Testis (tissue), 5 donors: ENCODE measurements at regions of chr13 and their contacts with region 1.

Region 1: GRCh38 chr13:114226699-114227323 is 7.9 kb upstream of the CDC16 start:
- DNase-seq: peak; percentile 93
- H3K4me3 ChIP-seq: no peak overlapping the region
- H3K27ac ChIP-seq: no peak overlapping the region
- H3K4me1 ChIP-seq: no peaks in the 10 kb centered on the region
- H3K27me3 ChIP-seq: no peaks in the 10 kb centered on the region
- CTCF ChIP-seq: peak; percentile 88 to 96 (median 93)
- POLR2A ChIP-seq: no peak

Region 2: GRCh38 chr13:113951246-113951999 is 275.4 kb before region 1 on chr13:
- intact Hi-C with region 1: loop called (anchors 5 kb)
- DNase-seq: peak; percentile 91
- H3K4me3 ChIP-seq: no peak overlapping the region
- H3K27ac ChIP-seq: no peak overlapping the region
- H3K4me1 ChIP-seq: peaks cover 5% of the 10 kb centered on the region
- H3K27me3 ChIP-seq: no peaks in the 10 kb centered on the region
- CTCF ChIP-seq: peak; percentile 79 to 93 (median 85)
- POLR2A ChIP-seq: no peak

Region 3: DNA sequence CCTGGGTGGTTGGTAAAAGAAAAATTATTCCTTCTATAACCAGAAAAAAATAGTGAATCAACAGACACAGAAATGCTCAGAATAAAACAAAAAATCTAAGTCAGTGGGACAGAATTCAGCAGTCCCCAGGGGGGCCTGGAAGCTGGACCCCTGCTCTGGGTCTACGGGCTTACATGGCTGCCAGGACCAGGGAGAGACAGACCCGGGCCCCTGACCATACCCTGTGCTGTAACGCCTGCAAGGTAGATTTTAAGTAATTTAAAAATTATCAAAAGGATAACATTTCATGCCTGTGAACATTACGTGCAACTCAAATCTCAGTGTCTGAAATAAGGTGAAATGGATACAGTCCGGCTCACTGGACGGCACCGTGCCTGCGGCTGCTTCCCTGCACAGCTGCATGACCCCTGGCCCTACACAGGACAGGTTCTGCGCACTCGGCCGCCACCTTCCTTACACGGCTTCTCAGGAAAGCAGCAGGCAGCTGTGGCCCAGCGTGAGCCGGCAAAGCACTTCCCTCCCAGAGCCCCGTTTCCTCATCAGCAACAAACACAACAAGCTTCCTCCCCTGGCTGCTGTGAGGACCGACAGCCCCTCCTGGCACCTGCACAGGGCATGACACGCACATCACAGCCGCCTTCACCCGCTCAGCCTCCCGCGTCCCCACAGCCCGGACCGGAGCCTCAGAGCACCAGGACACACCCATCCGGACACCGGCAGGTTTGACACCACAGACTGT is 116.6 kb before region 1 on chr13:
- intact Hi-C with region 1: no loop called
- DNase-seq: no peak
- H3K4me3 ChIP-seq: no peak overlapping the region
- H3K27ac ChIP-seq: no peak overlapping the region
- H3K4me1 ChIP-seq: no peaks in the 10 kb centered on the region
- H3K27me3 ChIP-seq: no peaks in the 10 kb centered on the region
- CTCF ChIP-seq: no peak
- POLR2A ChIP-seq: no peak

Region 4: DNA sequence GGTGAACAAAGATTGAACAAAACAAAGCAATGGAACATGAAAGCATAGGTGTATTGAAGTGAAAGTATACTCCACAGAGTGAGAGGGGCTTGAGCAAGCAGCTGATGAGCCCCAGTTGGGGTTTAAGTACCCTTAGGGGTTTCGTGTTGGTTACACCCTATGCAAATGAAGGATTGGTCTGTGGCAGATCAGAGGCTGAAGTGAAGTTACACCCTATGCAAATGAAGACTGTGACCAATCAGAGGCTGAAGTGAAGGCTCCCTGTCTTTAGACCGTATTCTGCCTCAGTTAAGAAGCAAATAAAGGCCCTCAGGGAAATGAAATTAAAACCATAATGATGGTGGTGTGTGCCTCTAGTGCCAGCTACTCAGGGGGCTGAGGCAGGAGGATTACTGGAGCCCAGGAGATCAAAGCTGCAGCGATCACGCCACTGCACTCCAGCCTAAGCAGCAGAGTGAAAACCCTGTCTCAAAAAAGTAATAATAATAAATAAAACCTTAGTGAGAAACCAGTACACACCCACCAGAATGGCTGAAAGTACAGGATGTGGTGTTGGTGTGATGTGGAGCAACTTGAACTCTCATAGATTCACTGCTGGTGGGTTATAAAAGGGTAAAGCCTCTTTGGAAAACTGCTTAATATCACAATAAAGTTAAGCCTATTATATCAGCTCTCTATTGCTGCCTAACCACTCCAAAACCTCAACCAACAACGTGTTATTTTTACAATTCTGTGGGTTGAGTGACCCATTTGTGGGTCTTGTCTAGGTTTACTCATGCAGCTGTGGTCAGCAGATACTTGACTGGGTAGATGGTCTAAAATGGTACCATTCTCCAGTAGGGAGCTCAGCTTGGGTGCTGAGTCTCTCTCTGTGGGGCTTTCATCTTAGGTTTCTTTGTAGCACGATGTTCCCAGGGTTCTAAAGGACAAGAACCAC is 41.8 kb after region 1 on chr13:
- intact Hi-C with region 1: no loop called
- DNase-seq: no peak
- H3K4me3 ChIP-seq: no peak overlapping the region
- H3K27ac ChIP-seq: no peak overlapping the region
- H3K4me1 ChIP-seq: no peaks in the 10 kb centered on the region
- H3K27me3 ChIP-seq: no peaks in the 10 kb centered on the region
- CTCF ChIP-seq: no peak
- POLR2A ChIP-seq: no peak